ENCODE measurements at regions of chr10 and their contacts with region 1.

Region 1: DNA sequence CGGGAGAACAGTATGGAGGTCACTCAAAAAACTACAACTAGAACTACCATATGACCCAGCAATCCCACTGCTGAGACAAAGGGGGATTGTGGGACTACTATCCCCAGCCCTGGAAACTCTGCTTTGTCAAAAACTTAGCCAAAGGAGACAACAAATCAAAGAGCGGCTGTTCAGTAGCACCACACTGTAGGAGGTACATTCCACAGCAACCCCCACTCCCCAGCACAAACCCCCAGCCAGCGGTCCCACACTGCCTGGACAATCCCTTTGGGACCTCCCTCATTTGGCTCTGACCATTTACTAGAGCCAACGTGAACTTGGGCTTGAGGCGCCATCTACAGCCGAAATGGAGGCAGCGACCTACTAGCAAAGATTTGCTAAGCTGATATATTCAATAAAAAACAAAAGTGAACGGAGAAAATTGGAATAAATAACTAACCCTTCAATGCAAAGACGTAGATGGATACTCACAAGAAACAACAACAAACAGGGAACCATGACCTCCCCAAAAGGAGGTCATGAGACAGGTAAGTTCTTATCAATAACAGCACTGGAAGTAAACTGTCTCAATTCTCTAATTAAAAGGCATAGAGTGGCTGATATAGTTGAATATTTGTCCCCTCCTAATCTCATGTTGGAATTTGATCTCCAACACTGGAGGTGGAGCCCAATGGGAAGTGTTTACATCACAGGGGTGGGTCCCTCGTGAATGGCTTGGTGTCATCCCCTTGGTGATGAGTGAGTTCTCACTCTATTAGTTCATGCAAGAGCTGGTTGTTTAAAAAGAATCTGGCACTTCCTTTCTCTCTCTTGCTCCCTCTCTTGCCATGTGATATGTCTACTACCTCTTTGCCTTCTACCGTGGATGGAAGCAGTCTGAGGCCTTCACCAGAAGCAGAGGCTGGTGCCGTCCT is 119.0 kb upstream of the KCNMA1 start:
- DNase-seq: peak; percentile 18
- ATAC-seq: peak; percentile 96
- H3K4me3 ChIP-seq: no peak overlapping the region
- H3K27ac ChIP-seq: no peak overlapping the region
- H3K4me1 ChIP-seq: no peaks in the 10 kb centered on the region
- H3K27me3 ChIP-seq: no peaks in the 10 kb centered on the region
- CTCF ChIP-seq: peak; percentile 93

Region 2: GRCh38 chr10:77718957-77719356 is 37.6 kb before region 1 on chr10:
- CTCF ChIA-PET with region 1: interaction called, 7 read pairs
- POLR2A ChIA-PET with region 1: no interaction called
- in situ Hi-C with region 1: no loop called
- intact Hi-C with region 1: loop called (anchors 1 kb)
- DNase-seq: no peak
- ATAC-seq: no peak
- H3K4me3 ChIP-seq: no peak overlapping the region
- H3K27ac ChIP-seq: no peak overlapping the region
- H3K4me1 ChIP-seq: no peaks in the 10 kb centered on the region
- H3K27me3 ChIP-seq: no peaks in the 10 kb centered on the region
- CTCF ChIP-seq: no peak

Region 3: DNA sequence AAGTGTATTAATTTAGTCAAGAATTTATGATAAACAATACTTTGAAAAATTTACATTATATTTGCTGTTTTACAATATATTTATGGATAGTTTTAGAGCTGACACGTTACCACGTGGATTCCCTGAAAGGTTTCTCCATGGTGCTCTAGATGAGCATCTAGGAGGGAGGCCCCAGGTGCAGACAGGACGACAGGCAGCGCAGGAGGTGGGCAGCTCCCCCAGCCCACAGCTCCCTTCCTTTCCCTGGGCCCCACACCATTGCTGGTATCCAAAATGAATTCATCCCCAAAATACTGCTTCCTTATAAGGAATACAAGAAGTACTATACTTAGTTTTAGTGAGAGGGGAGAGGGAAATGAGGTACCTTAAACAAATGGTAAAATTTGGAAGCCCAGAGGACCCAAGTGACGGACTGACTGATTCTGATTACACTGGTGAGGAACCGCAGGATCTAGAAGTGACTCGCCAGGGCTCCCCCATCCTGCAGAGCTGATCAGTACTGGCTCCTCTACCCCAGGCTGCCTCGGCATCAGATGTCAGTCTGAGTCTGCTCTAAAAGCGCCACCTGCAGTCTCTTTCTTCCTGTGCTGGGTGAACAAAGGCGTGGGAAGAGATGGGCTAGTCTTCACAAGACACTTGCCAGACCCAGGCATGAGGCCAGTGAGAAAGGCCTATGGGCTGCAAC is 80.8 kb after region 1 on chr10:
- CTCF ChIA-PET with region 1: no interaction called
- POLR2A ChIA-PET with region 1: no interaction called
- in situ Hi-C with region 1: no loop called
- intact Hi-C with region 1: no loop called
- DNase-seq: no peak
- ATAC-seq: peak; percentile 79
- H3K4me3 ChIP-seq: no peak overlapping the region
- H3K27ac ChIP-seq: no peak overlapping the region
- H3K4me1 ChIP-seq: no peaks in the 10 kb centered on the region
- H3K27me3 ChIP-seq: no peaks in the 10 kb centered on the region
- CTCF ChIP-seq: no peak